Ovary (tissue), 10 donors: ENCODE measurements at regions of chr6 and their contacts with region 1.

Region 1: GRCh38 chr6:110873981-110874879 is at the start of gene AMD1:
- DNase-seq: peak; percentile 97 to 98 (median 98)
- H3K4me3 ChIP-seq: peak within 1 kb of the TSS; percentile 84
- H3K27ac ChIP-seq: peak within 1 kb of the TSS; percentile 83 to 97
- H3K4me1 ChIP-seq: peaks cover 4% of the 10 kb centered on the region
- H3K27me3 ChIP-seq: no peaks in the 10 kb centered on the region
- CTCF ChIP-seq: no peak
- EP300 ChIP-seq: no peak
- POLR2A ChIP-seq: peak; percentile 99
- total RNA-seq, gene AMD1: 56.2 to 67.8 (median 61.0) TPM

Region 2: GRCh38 chr6:110815217-110816109 is 58.8 kb before region 1 on chr6 and contains the start of gene CDK19:
- intact Hi-C with region 1: loop called in 3 of 4 experiments (anchors 2 to 10 kb)
- DNase-seq: peak; percentile 96 to 98 (median 96)
- H3K4me3 ChIP-seq: peak within 1 kb of the TSS; percentile 78
- H3K27ac ChIP-seq: peak within 1 kb of the TSS; percentile 90 to 93
- H3K4me1 ChIP-seq: peaks cover 3% of the 10 kb centered on the region
- H3K27me3 ChIP-seq: no peaks in the 10 kb centered on the region
- CTCF ChIP-seq: no peak
- EP300 ChIP-seq: no peak
- POLR2A ChIP-seq: peak; percentile 57
- total RNA-seq, gene CDK19: 9.8 to 20.8 (median 18.1) TPM

Region 3: DNA sequence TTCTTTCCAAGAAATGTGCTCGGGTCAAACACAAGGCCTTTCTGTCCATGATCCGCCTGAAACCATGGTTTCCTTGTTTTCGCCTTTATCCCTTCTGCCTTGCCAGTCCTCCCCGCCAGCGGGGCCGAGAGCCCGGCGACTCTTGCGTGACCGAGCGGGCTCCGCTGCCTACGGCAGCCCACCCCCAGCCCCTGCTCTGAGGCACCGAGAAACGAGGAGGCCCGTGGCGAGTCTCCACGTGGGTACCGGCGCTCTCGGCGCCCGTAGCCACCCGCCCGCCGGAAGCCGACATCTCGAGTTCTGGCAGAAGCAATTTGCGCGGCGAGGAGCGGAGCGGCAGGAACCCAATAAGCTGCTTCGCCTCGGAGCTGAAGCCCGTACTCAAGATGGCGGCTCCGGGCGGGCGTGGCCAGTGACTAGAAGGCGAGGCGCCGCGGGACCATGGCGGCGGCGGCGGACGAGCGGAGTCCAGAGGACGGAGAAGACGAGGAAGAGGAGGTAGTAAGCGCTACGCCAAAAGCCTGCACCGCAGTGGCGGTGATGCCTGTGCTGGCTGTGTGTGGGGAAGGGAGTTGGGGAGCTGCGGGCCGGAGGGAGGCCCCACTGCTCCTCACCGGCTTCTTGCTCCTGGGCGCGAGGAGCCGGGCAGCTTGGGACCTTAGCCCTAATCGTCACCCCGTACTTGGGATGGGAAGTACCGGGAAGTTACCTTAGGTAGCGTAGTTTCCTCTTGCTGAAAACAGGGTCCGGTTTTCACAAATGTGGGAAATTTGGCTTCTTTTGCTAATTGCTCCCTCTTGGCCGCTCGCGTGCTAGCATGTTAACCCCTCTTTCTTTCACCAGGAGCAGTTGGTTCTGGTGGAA is 84.3 kb after region 1 on chr6 and contains the start of gene GTF3C6:
- intact Hi-C with region 1: loop called in 1 of 4 experiments (anchors 10 kb)
- DNase-seq: peak; percentile 86 to 94 (median 88)
- H3K4me3 ChIP-seq: peak within 1 kb of the TSS; percentile 91
- H3K27ac ChIP-seq: peak within 1 kb of the TSS; percentile 80 to 88
- H3K4me1 ChIP-seq: peaks cover 3% of the 10 kb centered on the region
- H3K27me3 ChIP-seq: no peaks in the 10 kb centered on the region
- CTCF ChIP-seq: no peak
- EP300 ChIP-seq: no peak
- POLR2A ChIP-seq: peak; percentile 32
- total RNA-seq, gene GTF3C6: 16.5 to 60.2 (median 47.8) TPM